ENCODE measurements at regions of chr1 and their contacts with region 1.

Region 1: GRCh38 chr1:111990878-111991718 is 1.6 kb upstream of the KCND3 start:
- DNase-seq: peak; percentile 85
- ATAC-seq: peak; percentile 74

Region 2: GRCh38 chr1:111801071-111801841 is 189.8 kb before region 1 on chr1:
- intact Hi-C with region 1: loop called (anchors 1 kb)
- DNase-seq: peak; percentile 55
- ATAC-seq: peak; percentile 90

Region 3: GRCh38 chr1:111880881-111881837 is 109.9 kb before region 1 on chr1:
- intact Hi-C with region 1: loop called (anchors 2 kb)
- DNase-seq: peak; percentile 69
- ATAC-seq: peak; percentile 56

Region 4: GRCh38 chr1:111948209-111949171 is 42.6 kb before region 1 on chr1:
- intact Hi-C with region 1: loop called (anchors 5 kb)
- DNase-seq: peak; percentile 73
- ATAC-seq: peak; percentile 84

Region 5: GRCh38 chr1:112027696-112028095 is 36.6 kb after region 1 on chr1:
- intact Hi-C with region 1: no loop called
- DNase-seq: no peak
- ATAC-seq: no peak

Region 6: GRCh38 chr1:112144733-112145426 is 153.8 kb after region 1 on chr1:
- intact Hi-C with region 1: loop called (anchors 2 kb)
- DNase-seq: no peak
- ATAC-seq: peak; percentile 88

Measured in Right ventricle myocardium inferior (tissue), 1 donor.